ENCODE measurements at regions of chr19 and their contacts with region 1.

Region 1: DNA sequence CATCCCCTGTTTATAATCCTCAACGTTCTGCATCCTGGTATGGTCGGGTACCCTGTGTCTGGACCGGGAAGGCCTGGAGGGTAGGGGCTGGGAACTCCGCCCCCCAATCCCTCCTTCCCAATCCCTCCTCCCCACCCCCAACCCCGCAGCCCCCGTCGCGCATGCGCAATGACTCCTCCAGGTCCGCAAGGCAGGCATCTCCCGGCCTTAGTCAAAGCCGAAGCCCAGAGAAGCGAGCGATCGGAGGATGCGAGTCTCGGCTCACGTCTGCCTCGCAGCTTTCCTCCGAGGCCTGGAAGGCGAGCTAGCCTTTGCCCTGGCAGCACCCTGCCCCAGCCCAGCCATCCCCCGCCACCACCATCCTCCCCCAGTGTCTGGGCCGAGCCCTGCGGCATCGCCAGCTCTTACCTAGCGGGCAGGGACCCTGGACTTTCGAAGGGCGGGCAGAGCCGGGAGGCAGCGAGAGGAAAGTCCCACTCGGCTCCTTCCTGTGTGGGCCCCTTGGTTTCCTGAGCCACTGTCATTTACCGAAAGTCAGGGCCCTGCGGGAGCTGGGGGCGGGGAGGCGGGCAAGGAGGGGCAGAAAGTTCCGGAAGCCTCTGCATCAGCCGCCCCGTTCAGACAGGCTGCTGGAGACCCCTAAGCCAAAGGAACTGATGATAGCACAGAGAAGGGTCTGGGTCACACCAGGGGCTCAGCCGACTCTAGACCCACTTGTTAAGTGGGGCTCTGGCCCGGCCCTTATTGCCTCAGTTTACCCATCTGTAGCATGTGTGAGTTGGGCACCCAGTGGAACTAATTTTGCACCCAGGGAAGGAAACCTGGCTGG is at the start of gene JAK3:
- DNase-seq: peak; percentile 80 to 91 (median 84)
- H3K4me3 ChIP-seq: peak within 1 kb of the TSS; percentile 52 to 76
- H3K4me3 Mint-ChIP-seq: peak within 1 kb of the TSS; percentile 91 to 98 (median 94)
- H3K27ac ChIP-seq: peak within 1 kb of the TSS; percentile 91
- H3K27ac Mint-ChIP-seq: peak within 1 kb of the TSS; percentile 95 to 98 (median 97)
- H3K4me1 ChIP-seq: peaks cover 76% of the 10 kb centered on the region
- H3K4me1 Mint-ChIP-seq: peaks cover 39 to 80% (median 59%) of the 10 kb centered on the region in 4 donors
- H3K27me3 ChIP-seq: no peaks in the 10 kb centered on the region
- H3K27me3 Mint-ChIP-seq: no peaks in the 10 kb centered on the region
- total RNA-seq, gene JAK3: 132 to 135 TPM

Region 2: GRCh38 chr19:17718947-17719711 is 128.6 kb before region 1 on chr19 and contains the start of gene MAP1S:
- CTCF ChIA-PET with region 1: interaction called, 3 read pairs
- POLR2A ChIA-PET with region 1: interaction called, 11 read pairs
- intact Hi-C with region 1: no loop called
- DNase-seq: peak; percentile 42 to 59 (median 47)
- H3K4me3 ChIP-seq: peak within 1 kb of the TSS; percentile 51 to 88
- H3K4me3 Mint-ChIP-seq: peak within 1 kb of the TSS; percentile 88 to 93 (median 90)
- H3K27ac ChIP-seq: peak within 1 kb of the TSS; percentile 53
- H3K27ac Mint-ChIP-seq: peak within 1 kb of the TSS; percentile 82 to 94 (median 91)
- H3K4me1 ChIP-seq: peaks cover 32% of the 10 kb centered on the region
- H3K4me1 Mint-ChIP-seq: peaks cover 19 to 46% (median 36%) of the 10 kb centered on the region in 4 donors
- H3K27me3 ChIP-seq: no peaks in the 10 kb centered on the region
- H3K27me3 Mint-ChIP-seq: no peaks in the 10 kb centered on the region
- total RNA-seq, gene MAP1S: 59.1 to 64.9 TPM

Measured in CD4-positive, alpha-beta memory T cell (primary cell).